H1 (cell line): ENCODE measurements at regions of chr10 and their contacts with region 1.

Region 1: DNA sequence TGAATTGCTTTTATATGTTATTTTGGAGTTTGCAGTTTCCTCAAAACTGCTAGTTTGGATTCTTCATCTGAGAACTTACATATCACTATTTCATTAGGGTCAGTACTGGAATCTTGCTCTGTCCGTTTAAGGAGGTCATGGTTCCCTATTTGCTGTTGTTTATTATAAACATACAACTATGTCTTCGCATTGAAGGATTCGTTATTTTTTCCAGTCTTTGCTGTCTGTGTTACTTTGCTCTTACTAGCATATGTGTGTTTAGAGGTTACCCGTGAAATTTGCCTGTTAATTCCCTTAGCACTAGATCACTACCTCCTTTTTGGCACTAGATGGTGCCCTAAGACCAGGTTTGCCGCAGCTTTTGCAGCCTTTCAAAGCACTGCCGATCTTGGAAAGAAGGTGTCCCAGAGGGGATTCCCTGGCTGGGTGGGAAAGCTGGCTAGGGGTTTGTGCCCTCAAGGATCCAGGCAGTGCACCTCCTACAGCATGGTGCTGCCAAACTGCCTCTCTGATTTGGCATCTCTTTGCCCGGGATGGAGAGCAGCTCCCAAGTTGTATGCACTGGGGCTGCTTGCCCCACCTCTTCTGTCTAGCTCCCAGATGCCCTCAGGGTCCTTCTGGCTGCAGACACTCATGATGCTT is 103.1 kb upstream of the APBB1IP start:
- DNase-seq: peak; percentile 31 to 58
- H3K4me3 ChIP-seq: no peak overlapping the region
- H3K27ac ChIP-seq: no peak overlapping the region
- H3K4me1 ChIP-seq: no peaks in the 10 kb centered on the region
- H3K27me3 ChIP-seq: no peaks in the 10 kb centered on the region
- CTCF ChIP-seq: peak; percentile 10 to 88 (median 81)
- EP300 ChIP-seq: no peak
- POLR2A ChIP-seq: no peak
- RAD21 ChIP-seq: peak; percentile 99 to 100

Region 2: GRCh38 chr10:26556748-26557640 is 221.9 kb after region 1 on chr10:
- CTCF ChIA-PET with region 1: interaction called, 48 read pairs
- POLR2A ChIA-PET with region 1: no interaction called
- DNase-seq: no peak
- H3K4me3 ChIP-seq: peak overlapping the region in 1 of 4 experiments; percentile 29; a peak in 1 of 8 replicates
- H3K27ac ChIP-seq: no peak overlapping the region
- H3K4me1 ChIP-seq: peaks cover 0 to 6% (median 2%) of the 10 kb centered on the region in 4 experiments; a peak in 3 of 7 replicates
- H3K27me3 ChIP-seq: no peaks in the 10 kb centered on the region
- CTCF ChIP-seq: peak; percentile 34 to 88 (median 82)
- EP300 ChIP-seq: no peak
- POLR2A ChIP-seq: no peak
- RAD21 ChIP-seq: peak; percentile 98